ENCODE measurements at regions of chr10 and their contacts with region 1.

Region 1: GRCh38 chr10:25226775-25227682 is 52.2 kb downstream of the GPR158 start:
- DNase-seq: peak in 1 of 2 experiments; percentile 23
- H3K4me3 ChIP-seq: no peak overlapping the region
- H3K27ac ChIP-seq: no peak overlapping the region
- H3K4me1 ChIP-seq: no peaks in the 10 kb centered on the region
- H3K27me3 ChIP-seq: no peaks in the 10 kb centered on the region
- CTCF ChIP-seq: peak; percentile 68

Region 2: GRCh38 chr10:24556750-24557742 is 670.0 kb before region 1 on chr10:
- CTCF ChIA-PET with region 1: no interaction called
- POLR2A ChIA-PET with region 1: no interaction called
- intact Hi-C with region 1: loop called (anchors 10 kb)
- DNase-seq: peak in 1 of 2 experiments; percentile 47
- H3K4me3 ChIP-seq: no peak overlapping the region
- H3K27ac ChIP-seq: no peak overlapping the region
- H3K4me1 ChIP-seq: no peaks in the 10 kb centered on the region
- H3K27me3 ChIP-seq: no peaks in the 10 kb centered on the region
- CTCF ChIP-seq: peak; percentile 75

Region 3: GRCh38 chr10:24929056-24929544 is 297.9 kb before region 1 on chr10:
- CTCF ChIA-PET with region 1: no interaction called
- POLR2A ChIA-PET with region 1: interaction called, 13 read pairs
- intact Hi-C with region 1: no loop called
- DNase-seq: no peak
- H3K4me3 ChIP-seq: no peak overlapping the region
- H3K27ac ChIP-seq: no peak overlapping the region
- H3K4me1 ChIP-seq: 0 out of 2 replicates have a peak, but pooled peaks cover 6% of the 10 kb centered on the region
- H3K27me3 ChIP-seq: no peaks in the 10 kb centered on the region
- CTCF ChIP-seq: no peak

Region 4: DNA sequence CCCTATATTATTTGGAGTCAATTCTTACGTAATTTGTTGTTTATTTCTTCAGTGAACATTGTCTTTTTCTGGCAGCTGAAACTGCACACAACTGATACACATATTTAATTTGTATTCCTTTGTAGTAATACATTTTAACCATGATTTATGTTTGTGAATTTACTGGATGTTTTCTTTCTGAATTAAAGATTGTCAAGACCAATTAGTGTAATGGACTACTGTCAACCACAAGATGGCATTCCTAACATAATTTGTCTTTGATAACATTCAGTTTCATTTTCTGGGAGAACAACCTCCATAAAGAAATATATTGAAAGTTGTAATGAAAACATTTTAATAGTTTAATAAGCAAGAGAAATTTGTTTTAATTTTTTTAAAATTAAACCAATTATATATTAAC is 200.6 kb before region 1 on chr10:
- CTCF ChIA-PET with region 1: no interaction called
- POLR2A ChIA-PET with region 1: no interaction called
- intact Hi-C with region 1: loop called (anchors 2 kb)
- DNase-seq: no peak
- H3K4me3 ChIP-seq: no peak overlapping the region
- H3K27ac ChIP-seq: no peak overlapping the region
- H3K4me1 ChIP-seq: no peaks in the 10 kb centered on the region; the same call in 1 of the 2 replicates
- H3K27me3 ChIP-seq: no peaks in the 10 kb centered on the region
- CTCF ChIP-seq: peak; percentile 48; the same call in 1 of the 2 replicates

Measured in PC-9 (cell line).